ENCODE measurements at regions of chr9 and their contacts with region 1.

Region 1: DNA sequence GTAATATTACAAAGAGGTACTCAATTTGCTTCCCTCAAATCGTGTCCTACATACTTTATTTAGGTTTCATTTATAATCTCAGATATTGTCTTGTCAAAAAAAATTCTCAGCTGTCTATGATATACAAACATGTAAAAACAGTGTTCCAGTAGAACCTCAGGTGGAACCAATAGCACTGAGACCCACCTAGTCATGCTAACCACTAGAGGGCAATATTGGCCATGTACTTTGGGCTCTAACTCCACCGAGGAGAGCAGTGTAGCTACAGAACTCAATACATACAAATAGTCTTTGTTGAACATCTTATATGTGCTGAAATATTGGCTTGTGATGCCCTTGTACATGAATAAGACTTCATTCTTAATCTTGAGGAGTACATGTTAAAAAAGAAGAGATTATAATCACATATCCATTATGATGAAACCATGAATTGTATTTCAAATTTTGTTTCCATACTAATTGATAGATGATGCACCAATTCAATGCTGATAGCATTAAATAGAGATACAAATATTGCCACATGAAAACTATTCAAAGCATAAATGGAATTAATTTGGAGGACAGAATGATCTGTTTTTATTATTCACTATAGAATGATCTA is 71.2 kb upstream of the CNTLN start:
- DNase-seq: peak; percentile 72
- H3K4me3 Mint-ChIP-seq: no peak overlapping the region
- H3K27ac Mint-ChIP-seq: no peak overlapping the region
- H3K4me1 Mint-ChIP-seq: no peaks in the 10 kb centered on the region
- H3K27me3 Mint-ChIP-seq: peaks cover 8% of the 10 kb centered on the region
- CTCF ChIP-seq: peak; percentile 74

Region 2: GRCh38 chr9:16871356-16872151 is 192.1 kb before region 1 on chr9:
- CTCF ChIA-PET with region 1: no interaction called
- POLR2A ChIA-PET with region 1: no interaction called
- intact Hi-C with region 1: no loop called
- DNase-seq: peak; percentile 64
- H3K4me3 Mint-ChIP-seq: peak overlapping the region; percentile 81
- H3K27ac Mint-ChIP-seq: peak overlapping the region; percentile 39
- H3K4me1 Mint-ChIP-seq: peaks cover 5% of the 10 kb centered on the region
- H3K27me3 Mint-ChIP-seq: no peaks in the 10 kb centered on the region
- CTCF ChIP-seq: no peak

Region 3: GRCh38 chr9:17052626-17053025 is 11.0 kb before region 1 on chr9:
- CTCF ChIA-PET with region 1: interaction called, 36 read pairs
- POLR2A ChIA-PET with region 1: no interaction called
- intact Hi-C with region 1: no loop called
- DNase-seq: no peak
- H3K4me3 Mint-ChIP-seq: no peak overlapping the region
- H3K27ac Mint-ChIP-seq: no peak overlapping the region
- H3K4me1 Mint-ChIP-seq: no peaks in the 10 kb centered on the region
- H3K27me3 Mint-ChIP-seq: no peaks in the 10 kb centered on the region
- CTCF ChIP-seq: no peak

Region 4: DNA sequence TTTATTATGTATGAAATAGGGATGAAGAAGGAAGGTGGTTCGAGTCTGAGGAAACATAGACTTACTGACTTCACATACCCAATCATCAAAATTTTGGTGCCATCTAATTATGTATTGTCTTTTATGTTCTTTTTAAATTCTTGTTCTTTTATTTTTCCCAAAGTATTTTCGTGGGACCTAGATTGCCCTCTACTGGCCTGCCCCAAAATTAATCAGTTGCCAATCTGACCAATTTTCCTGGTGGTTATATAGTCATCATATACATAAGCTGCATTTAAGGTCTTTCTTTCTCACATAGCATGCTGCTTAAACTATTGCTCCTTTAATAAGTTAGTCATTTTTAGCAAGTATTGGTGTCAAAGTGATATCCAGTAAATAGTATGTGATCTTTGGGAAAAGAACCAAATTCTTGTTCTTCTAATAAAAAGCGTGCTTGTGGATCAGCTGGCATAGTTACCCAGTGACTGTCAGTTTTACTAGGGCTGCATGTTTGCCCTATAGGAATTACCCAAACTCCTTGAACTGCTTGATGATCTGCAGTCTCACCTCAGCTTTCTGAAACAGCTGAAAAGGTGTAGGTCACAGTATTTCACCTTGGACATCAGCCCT is 738.7 kb after region 1 on chr9:
- CTCF ChIA-PET with region 1: no interaction called
- POLR2A ChIA-PET with region 1: no interaction called
- intact Hi-C with region 1: loop called (anchors 10 kb)
- DNase-seq: peak; percentile 28
- H3K4me3 Mint-ChIP-seq: no peak overlapping the region
- H3K27ac Mint-ChIP-seq: no peak overlapping the region
- H3K4me1 Mint-ChIP-seq: no peaks in the 10 kb centered on the region
- H3K27me3 Mint-ChIP-seq: peaks cover 33% of the 10 kb centered on the region
- CTCF ChIP-seq: peak; percentile 52

Measured in MCF 10A (cell line).